ENCODE measurements at regions of chr6 and their contacts with region 1.

Region 1: DNA sequence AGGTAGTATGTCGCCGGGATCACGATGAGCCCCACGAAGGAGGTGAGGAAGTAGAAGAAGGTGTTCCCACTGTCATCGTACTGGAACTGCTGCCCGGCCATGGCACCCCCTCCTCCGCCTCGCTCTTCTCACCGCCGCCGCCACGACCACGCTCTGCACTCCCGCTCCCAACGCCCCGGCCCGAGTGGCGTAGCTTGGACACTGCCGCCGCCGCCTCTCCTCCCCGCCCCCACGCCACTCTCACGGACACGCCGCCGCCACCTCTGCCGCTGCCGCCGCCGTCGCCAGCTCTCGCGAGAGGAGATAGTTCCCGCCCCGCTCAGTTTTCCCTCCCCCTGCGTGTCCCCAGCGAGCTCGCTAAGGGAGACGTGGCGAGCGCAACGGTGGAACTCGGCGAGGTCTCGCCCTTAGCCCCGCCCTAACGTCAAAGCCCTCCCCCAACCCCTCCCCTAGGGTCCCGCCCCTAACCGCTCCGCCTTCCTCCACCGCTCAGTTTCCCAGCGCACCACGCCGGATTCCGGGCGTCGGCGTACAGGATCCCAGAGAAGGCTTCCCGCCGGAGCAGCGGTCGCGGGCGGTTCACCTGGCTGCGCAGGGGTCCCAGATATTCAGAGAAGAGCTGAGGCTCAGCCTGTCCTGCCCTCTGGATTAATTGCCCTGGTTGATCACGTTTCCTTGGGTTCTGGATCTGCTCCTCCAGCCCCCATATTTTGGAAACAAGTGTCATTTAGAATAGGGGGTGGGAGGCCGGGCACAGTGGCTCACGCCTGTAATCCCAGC is at the start of gene SEC63:
- DNase-seq: peak; percentile 92
- ATAC-seq: peak; percentile 92
- H3K4me3 ChIP-seq: peak within 1 kb of the TSS; percentile 95
- H3K27ac ChIP-seq: peak within 1 kb of the TSS; percentile 56
- H3K4me1 ChIP-seq: peaks cover 19% of the 10 kb centered on the region
- H3K27me3 ChIP-seq: no peaks in the 10 kb centered on the region
- CTCF ChIP-seq: no peak
- total RNA-seq, gene SEC63: 12.2 and 16.0 TPM in 2 replicates

Region 2: DNA sequence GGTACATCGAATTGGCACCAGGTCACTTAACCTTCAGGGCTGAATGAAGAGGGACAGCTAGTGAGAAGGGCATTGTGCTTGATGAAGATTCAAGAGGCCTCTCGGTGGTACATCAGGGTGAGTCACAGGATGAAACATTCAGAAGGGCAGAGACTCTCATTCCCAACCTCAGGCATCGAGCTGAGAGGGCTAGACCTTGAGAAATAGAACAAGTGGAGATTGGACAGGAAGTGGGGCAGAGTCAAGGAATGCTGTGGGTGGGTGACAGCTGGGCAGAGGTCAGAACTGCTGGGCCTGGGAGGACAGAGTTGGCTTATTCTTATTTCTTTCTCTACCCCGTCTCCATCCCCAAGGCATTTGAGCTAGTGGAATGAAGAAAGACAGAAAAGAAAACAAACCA is 260.0 kb before region 1 on chr6:
- CTCF ChIA-PET with region 1: no interaction called
- POLR2A ChIA-PET with region 1: no interaction called
- intact Hi-C with region 1: no loop called
- DNase-seq: no peak
- ATAC-seq: no peak
- H3K4me3 ChIP-seq: no peak overlapping the region
- H3K27ac ChIP-seq: no peak overlapping the region
- H3K4me1 ChIP-seq: no peaks in the 10 kb centered on the region
- H3K27me3 ChIP-seq: peaks cover 9% of the 10 kb centered on the region
- CTCF ChIP-seq: no peak

Region 3: DNA sequence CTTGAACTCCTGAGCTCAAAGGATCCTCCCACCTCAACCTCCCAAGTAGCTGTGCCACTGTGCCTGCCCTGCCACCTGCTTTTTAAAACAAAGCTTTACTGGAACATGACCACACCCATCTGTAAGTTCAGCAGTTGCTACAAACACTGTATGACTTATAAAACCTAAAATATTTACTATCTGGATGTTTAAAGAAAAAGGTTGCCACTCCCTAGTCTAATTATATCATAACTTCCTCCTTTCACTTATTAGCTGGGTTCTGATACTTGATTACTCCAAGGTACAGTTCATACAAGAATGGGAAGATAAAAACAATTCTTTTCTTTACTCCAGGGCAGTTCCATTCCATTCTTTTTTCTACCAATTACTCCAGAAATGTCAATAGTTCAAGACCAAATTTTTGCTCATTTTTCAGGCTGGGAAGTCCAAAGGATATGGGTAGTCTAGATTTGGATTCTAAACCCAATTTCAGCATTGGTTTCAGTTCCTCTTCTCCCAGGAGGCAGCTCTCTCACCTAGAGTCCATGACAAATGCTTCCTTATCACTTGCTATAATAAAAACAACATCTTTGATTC is 63.2 kb before region 1 on chr6:
- CTCF ChIA-PET with region 1: no interaction called
- POLR2A ChIA-PET with region 1: no interaction called
- intact Hi-C with region 1: loop called (anchors 10 kb)
- DNase-seq: peak; percentile 31
- ATAC-seq: peak; percentile 96
- H3K4me3 ChIP-seq: no peak overlapping the region
- H3K27ac ChIP-seq: peak overlapping the region; percentile 57
- H3K4me1 ChIP-seq: peaks cover 9% of the 10 kb centered on the region
- H3K27me3 ChIP-seq: no peaks in the 10 kb centered on the region
- CTCF ChIP-seq: no peak

Region 4: GRCh38 chr6:108039681-108040080 is 81.6 kb after region 1 on chr6:
- CTCF ChIA-PET with region 1: no interaction called
- POLR2A ChIA-PET with region 1: no interaction called
- intact Hi-C with region 1: no loop called
- DNase-seq: no peak
- ATAC-seq: no peak
- H3K4me3 ChIP-seq: no peak overlapping the region
- H3K27ac ChIP-seq: no peak overlapping the region
- H3K4me1 ChIP-seq: no peaks in the 10 kb centered on the region
- H3K27me3 ChIP-seq: no peaks in the 10 kb centered on the region
- CTCF ChIP-seq: no peak

Region 5: DNA sequence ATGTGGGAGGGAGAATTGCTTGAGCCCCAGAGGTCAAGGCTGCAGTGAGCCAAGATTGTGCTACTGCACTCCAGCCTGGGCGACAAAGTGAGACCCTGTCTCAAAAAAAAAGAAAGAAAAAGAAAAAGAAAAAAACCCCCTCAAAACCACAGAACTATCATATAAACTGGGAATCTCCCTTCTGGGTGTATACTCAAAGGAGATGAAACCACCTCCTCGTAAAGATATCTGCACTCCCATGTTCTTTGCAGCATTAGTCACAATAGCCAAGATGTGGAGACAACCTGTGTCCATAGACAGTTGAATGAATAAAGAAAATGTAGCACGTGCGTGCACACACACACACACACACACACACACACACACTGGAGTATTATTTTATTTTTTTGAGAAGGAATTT is 328.3 kb after region 1 on chr6:
- CTCF ChIA-PET with region 1: no interaction called
- POLR2A ChIA-PET with region 1: no interaction called
- intact Hi-C with region 1: no loop called
- DNase-seq: no peak
- ATAC-seq: no peak
- H3K4me3 ChIP-seq: no peak overlapping the region
- H3K27ac ChIP-seq: no peak overlapping the region
- H3K4me1 ChIP-seq: no peaks in the 10 kb centered on the region
- H3K27me3 ChIP-seq: no peaks in the 10 kb centered on the region
- CTCF ChIP-seq: no peak

Measured in PC-3 (cell line).